IMR-90 (cell line): ENCODE measurements at regions of chr10 and their contacts with region 1.

Region 1: DNA sequence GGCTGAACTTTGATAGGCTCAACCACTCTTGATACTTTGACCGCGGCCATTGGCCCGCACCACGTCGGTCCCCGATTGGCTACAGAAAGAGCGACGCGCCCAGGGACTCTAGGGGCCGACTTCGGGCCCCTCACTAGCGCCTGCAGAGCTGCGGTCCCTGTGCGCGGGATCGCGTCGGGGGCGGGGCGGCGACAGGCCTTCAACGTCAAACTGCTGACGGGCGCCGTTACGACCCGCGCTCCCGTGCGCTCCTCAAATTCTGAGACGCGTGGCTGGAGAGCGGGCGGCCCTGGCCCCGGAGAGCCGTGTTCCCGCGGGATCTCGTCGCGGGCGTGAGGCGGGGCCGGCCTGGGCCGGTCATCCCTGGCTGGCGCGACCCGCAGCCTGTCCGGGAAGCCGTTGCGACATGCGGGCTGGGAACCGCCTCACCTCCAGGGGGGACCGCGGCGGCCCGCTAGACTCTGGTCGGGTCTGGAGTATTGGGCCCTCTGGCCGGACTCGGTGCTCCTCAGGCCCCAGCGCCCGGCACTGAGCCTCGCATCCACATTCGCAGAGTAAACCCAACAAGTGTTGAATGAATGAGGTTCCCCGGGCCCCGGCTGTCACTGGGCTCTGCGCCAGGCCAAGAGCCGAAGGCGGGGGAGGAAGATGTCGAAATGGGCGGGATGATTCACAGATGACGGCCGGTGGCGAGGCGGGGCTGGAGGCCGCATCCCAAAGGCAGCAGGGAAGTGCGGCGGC is 644 bp upstream of the SLC25A28 start:
- DNase-seq: peak; percentile 94
- ATAC-seq: peak; percentile 92
- H3K4me3 ChIP-seq: peak overlapping the region; percentile 56
- H3K27ac ChIP-seq: peak overlapping the region; percentile 93
- H3K4me1 ChIP-seq: no peaks in the 10 kb centered on the region
- H3K27me3 ChIP-seq: no peaks in the 10 kb centered on the region
- CTCF ChIP-seq: no peak
- POLR2A ChIP-seq: peak; percentile 91
- RAD21 ChIP-seq: peak; percentile 5; the same call in 1 of the 2 replicates

Region 2: GRCh38 chr10:99659031-99659867 is 38.4 kb after region 1 on chr10 and contains the start of gene ENTPD7:
- CTCF ChIA-PET with region 1: no interaction called
- POLR2A ChIA-PET with region 1: no interaction called
- dilution Hi-C with region 1: no loop called
- in situ Hi-C with region 1: no loop called
- intact Hi-C with region 1: loop called (anchors 5 kb)
- DNase-seq: peak; percentile 95
- ATAC-seq: peak; percentile 99
- H3K4me3 ChIP-seq: peak within 1 kb of the TSS; percentile 79
- H3K27ac ChIP-seq: peak within 1 kb of the TSS; percentile 69
- H3K4me1 ChIP-seq: peaks cover 5% of the 10 kb centered on the region; the same call in 1 of the 2 replicates
- H3K27me3 ChIP-seq: no peaks in the 10 kb centered on the region
- CTCF ChIP-seq: 0 out of 2 replicates have a peak, but pooled peaks have one; percentile 8
- POLR2A ChIP-seq: peak; percentile 88
- RAD21 ChIP-seq: no peak
- total RNA-seq, gene ENTPD7: 20.0 and 23.3 TPM in 2 replicates

Region 3: DNA sequence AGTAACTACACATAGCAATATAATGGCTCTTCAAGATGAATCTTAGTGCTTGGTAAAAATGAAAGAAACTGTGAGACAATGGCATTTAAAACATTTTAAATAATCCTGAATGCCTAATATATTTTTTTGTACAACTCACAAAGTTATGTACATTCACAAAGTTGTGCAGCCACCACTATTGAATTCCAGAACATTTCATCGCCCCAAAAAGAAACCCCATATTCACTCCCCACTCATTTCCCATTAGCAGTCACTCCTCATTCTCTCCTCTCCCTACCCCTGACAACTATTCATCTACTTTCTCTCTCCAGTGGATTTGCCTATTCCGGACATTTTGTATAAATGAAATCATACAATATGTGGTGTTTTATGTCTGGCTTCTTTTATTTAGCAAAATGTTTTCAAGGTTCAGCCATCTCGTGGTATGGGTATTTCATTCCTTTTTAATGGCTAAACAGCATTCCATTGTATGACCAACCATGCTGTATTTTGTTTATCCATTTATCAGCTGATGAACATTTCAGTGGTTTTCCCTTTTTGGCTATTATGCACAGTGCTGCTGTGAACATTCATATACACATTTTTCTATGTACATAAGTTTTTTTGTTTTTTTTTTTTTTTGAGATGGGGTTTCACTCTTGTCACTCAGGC is 73.2 kb after region 1 on chr10:
- CTCF ChIA-PET with region 1: no interaction called
- POLR2A ChIA-PET with region 1: no interaction called
- dilution Hi-C with region 1: no loop called
- in situ Hi-C with region 1: no loop called
- intact Hi-C with region 1: loop called (anchors 1 kb)
- DNase-seq: peak; percentile 91
- ATAC-seq: peak; percentile 90
- H3K4me3 ChIP-seq: no peak overlapping the region; the same call in 1 of the 2 replicates
- H3K27ac ChIP-seq: peak overlapping the region; percentile 96
- H3K4me1 ChIP-seq: peaks cover 15% of the 10 kb centered on the region
- H3K27me3 ChIP-seq: no peaks in the 10 kb centered on the region
- CTCF ChIP-seq: no peak
- POLR2A ChIP-seq: no peak
- RAD21 ChIP-seq: no peak

Region 4: GRCh38 chr10:99742701-99743100 is 121.8 kb after region 1 on chr10:
- CTCF ChIA-PET with region 1: no interaction called
- POLR2A ChIA-PET with region 1: no interaction called
- dilution Hi-C with region 1: no loop called
- in situ Hi-C with region 1: no loop called
- intact Hi-C with region 1: no loop called
- DNase-seq: peak; percentile 48
- ATAC-seq: peak; percentile 33
- H3K4me3 ChIP-seq: no peak overlapping the region
- H3K27ac ChIP-seq: no peak overlapping the region
- H3K4me1 ChIP-seq: peaks cover 8% of the 10 kb centered on the region
- H3K27me3 ChIP-seq: no peaks in the 10 kb centered on the region
- CTCF ChIP-seq: no peak
- POLR2A ChIP-seq: no peak
- RAD21 ChIP-seq: no peak

Region 5: GRCh38 chr10:99913831-99914235 is 292.9 kb after region 1 on chr10:
- CTCF ChIA-PET with region 1: no interaction called
- POLR2A ChIA-PET with region 1: no interaction called
- dilution Hi-C with region 1: no loop called
- in situ Hi-C with region 1: no loop called
- intact Hi-C with region 1: no loop called
- DNase-seq: no peak
- ATAC-seq: no peak
- H3K4me3 ChIP-seq: no peak overlapping the region
- H3K27ac ChIP-seq: no peak overlapping the region
- H3K4me1 ChIP-seq: peaks cover 9% of the 10 kb centered on the region
- H3K27me3 ChIP-seq: no peaks in the 10 kb centered on the region
- CTCF ChIP-seq: no peak
- POLR2A ChIP-seq: no peak
- RAD21 ChIP-seq: no peak